Heart right ventricle (tissue), 16 donors: ENCODE measurements at regions of chr6 and their contacts with region 1.

Region 1: GRCh38 chr6:209432-210103 is 82.7 kb upstream of the DUSP22 start:
- DNase-seq: no peak
- ATAC-seq: no peak
- H3K4me3 ChIP-seq: peak overlapping the region in 1 of 10 donors; percentile 37
- H3K27ac ChIP-seq: peak overlapping the region in 1 of 10 donors; percentile 44
- H3K4me1 ChIP-seq: peaks cover 0 to 5% (median 0%) of the 10 kb centered on the region in 9 donors
- H3K27me3 ChIP-seq: peaks cover 0 to 42% (median 16%) of the 10 kb centered on the region in 7 donors
- CTCF ChIP-seq: no peak

Region 2: GRCh38 chr6:168865-169455 is 40.6 kb before region 1 on chr6:
- intact Hi-C with region 1: no loop called
- DNase-seq: no peak
- ATAC-seq: no peak
- H3K4me3 ChIP-seq: no peak overlapping the region
- H3K27ac ChIP-seq: no peak overlapping the region
- H3K4me1 ChIP-seq: peaks cover 0 to 4% (median 0%) of the 10 kb centered on the region in 9 donors
- H3K27me3 ChIP-seq: peaks cover 0 to 22% (median 3%) of the 10 kb centered on the region in 7 donors
- CTCF ChIP-seq: peak; percentile 28 to 72 (median 70)

Region 3: DNA sequence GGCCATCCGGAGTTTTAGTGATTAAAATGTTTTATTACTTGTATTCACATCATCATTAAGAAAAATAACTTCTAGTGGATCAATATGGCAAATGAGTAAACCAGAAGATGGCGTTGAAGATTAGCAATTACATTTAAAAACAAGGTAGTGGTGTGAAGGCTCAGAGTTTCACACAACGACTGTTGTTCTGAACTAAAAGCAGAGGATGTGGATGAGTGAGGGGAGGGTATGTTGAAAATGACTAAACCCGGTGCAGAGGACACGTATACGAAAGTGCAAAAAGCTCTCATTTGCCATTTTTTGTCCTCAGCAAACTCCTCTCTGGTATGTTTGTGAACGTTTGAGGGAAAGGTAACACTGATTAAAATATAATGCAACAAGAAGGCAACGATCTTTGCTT is 180.1 kb after region 1 on chr6:
- intact Hi-C with region 1: loop called in 1 of 10 experiments (anchors 10 kb)
- DNase-seq: no peak
- ATAC-seq: no peak
- H3K4me3 ChIP-seq: no peak overlapping the region
- H3K27ac ChIP-seq: no peak overlapping the region
- H3K4me1 ChIP-seq: peaks cover 7 to 30% (median 25%) of the 10 kb centered on the region in 9 donors
- H3K27me3 ChIP-seq: peaks cover 28 to 99% (median 92%) of the 10 kb centered on the region in 7 donors
- CTCF ChIP-seq: no peak